ENCODE measurements at regions of chr5 and their contacts with region 1.

Region 1: DNA sequence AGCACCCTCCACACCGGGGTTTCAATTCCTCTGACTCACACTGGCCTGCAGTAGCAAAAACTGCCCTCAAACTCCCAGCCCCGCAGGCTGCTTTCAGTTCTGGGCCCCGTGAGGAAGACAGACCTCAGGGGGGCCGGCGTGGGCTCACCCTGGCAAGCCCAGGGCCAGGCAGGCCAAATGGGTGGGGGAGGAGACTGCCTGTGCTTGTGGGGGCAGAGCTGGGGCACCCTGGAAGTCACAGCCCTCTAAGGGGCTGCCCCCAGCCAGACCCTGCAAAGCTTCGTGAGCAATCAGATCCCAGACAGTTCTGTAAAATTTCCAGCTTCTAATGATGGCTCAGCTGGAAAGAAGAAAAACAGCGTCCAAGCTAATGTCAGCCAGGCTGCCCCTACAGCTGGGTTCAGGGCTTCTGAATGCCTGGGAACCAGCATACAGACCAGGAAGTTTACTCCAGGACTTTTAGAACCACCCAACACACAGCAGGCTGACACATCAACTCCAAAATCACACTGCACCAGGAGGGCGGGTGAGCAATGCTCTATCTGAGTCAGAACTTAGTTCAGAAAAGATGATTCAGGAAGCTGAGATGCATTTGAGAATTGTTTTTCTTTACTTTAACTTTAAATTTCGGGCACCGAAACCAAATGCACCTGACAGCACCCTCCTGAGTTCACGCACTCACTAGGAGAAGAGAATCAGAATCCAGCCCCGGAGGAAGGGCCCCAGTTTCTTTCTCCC is 34.6 kb downstream of the LPCAT1 start:
- DNase-seq: peak; percentile 80
- ATAC-seq: peak; percentile 96
- H3K4me3 Mint-ChIP-seq: no peak overlapping the region
- H3K27ac Mint-ChIP-seq: peak overlapping the region; percentile 82
- H3K4me1 Mint-ChIP-seq: peaks cover 37% of the 10 kb centered on the region
- H3K27me3 Mint-ChIP-seq: no peaks in the 10 kb centered on the region

Region 2: GRCh38 chr5:1111727-1112289 is 377.3 kb before region 1 on chr5 and contains the start of gene SLC12A7:
- CTCF ChIA-PET with region 1: no interaction called
- POLR2A ChIA-PET with region 1: no interaction called
- intact Hi-C with region 1: loop called in 1 of 2 experiments (anchors 2 kb)
- DNase-seq: peak; percentile 84
- ATAC-seq: peak; percentile 76
- H3K4me3 Mint-ChIP-seq: peak within 1 kb of the TSS; percentile 82
- H3K27ac Mint-ChIP-seq: peak within 1 kb of the TSS; percentile 75
- H3K4me1 Mint-ChIP-seq: peaks cover 33% of the 10 kb centered on the region
- H3K27me3 Mint-ChIP-seq: no peaks in the 10 kb centered on the region
- total RNA-seq, gene SLC12A7: 18.5 to 21.6 TPM

Region 3: DNA sequence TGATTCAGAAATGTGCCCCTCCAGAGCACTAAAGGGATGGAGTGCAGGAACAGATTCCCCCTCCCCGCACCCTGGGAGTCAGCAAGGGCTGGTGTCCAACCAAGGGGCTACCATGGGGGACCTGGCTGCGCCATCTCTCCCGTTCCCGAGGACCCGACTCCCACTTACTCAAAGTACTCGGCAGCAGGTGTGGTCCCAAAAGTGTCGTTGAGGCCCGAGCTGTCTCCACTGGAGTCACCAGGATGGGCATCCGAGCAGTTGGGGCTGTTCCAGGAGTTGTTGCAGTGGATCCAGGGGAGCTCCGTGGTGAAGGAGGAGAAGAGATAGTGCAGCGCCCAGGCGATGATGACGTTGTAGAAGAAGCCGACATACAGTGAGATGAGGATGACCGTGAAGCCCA is 56.8 kb before region 1 on chr5:
- CTCF ChIA-PET with region 1: no interaction called
- POLR2A ChIA-PET with region 1: no interaction called
- intact Hi-C with region 1: loop called in 1 of 2 experiments (anchors 2 kb)
- DNase-seq: no peak
- ATAC-seq: no peak
- H3K4me3 Mint-ChIP-seq: no peak overlapping the region
- H3K27ac Mint-ChIP-seq: no peak overlapping the region
- H3K4me1 Mint-ChIP-seq: no peaks in the 10 kb centered on the region
- H3K27me3 Mint-ChIP-seq: peaks cover 7% of the 10 kb centered on the region